T-cell (primary cell): ENCODE measurements at regions of chr3 and their contacts with region 1.

Region 1: GRCh38 chr3:67384760-67385397 is 269.5 kb downstream of the SUCLG2 start:
- DNase-seq: peak in 31 of 35 experiments; percentile 2 to 54 (median 25)
- ATAC-seq: peak in 1 of 4 experiments; percentile 49
- H3K4me3 ChIP-seq: no peak overlapping the region
- H3K4me3 Mint-ChIP-seq: no peak overlapping the region
- H3K27ac ChIP-seq: no peak overlapping the region
- H3K27ac Mint-ChIP-seq: peak overlapping the region in 1 of 2 donors; percentile 64
- H3K4me1 ChIP-seq: peaks cover 0 to 2% of the 10 kb centered on the region in 2 experiments
- H3K4me1 Mint-ChIP-seq: peaks cover 5 to 13% (median 6%) of the 10 kb centered on the region in 3 donors
- H3K27me3 ChIP-seq: no peaks in the 10 kb centered on the region
- H3K27me3 Mint-ChIP-seq: no peaks in the 10 kb centered on the region

Region 2: GRCh38 chr3:67478423-67478822 is 93.5 kb after region 1 on chr3:
- CTCF ChIA-PET with region 1: no interaction called
- POLR2A ChIA-PET with region 1: no interaction called
- DNase-seq: no peak
- ATAC-seq: no peak
- H3K4me3 ChIP-seq: no peak overlapping the region
- H3K4me3 Mint-ChIP-seq: no peak overlapping the region
- H3K27ac ChIP-seq: no peak overlapping the region
- H3K27ac Mint-ChIP-seq: no peak overlapping the region
- H3K4me1 ChIP-seq: no peaks in the 10 kb centered on the region
- H3K4me1 Mint-ChIP-seq: peaks cover 0 to 17% (median 4%) of the 10 kb centered on the region in 3 donors
- H3K27me3 ChIP-seq: no peaks in the 10 kb centered on the region
- H3K27me3 Mint-ChIP-seq: no peaks in the 10 kb centered on the region

Region 3: DNA sequence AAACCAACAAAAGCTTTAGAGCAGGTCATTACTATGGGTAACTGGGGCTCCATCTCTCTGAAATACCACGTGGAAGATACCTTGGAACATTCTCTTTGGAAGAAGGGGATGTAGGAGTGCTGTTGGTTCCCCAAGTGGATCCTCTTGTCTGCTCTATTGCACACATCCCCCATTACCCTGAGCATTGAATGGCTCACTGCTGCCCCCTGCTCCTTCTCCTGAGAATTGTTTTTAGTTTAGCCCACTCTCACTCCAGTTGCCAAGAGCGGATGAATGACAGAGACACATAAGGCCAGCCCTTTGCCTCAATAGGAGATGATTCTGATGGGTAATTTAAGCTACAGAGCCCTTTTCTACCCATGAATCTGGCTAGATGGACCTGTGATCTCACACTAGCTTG is 405.2 kb after region 1 on chr3:
- CTCF ChIA-PET with region 1: interaction called, 14 to 22 read pairs
- POLR2A ChIA-PET with region 1: no interaction called
- DNase-seq: peak in 34 of 35 experiments; percentile 13 to 77 (median 54)
- ATAC-seq: peak; percentile 76 to 93 (median 82)
- H3K4me3 ChIP-seq: no peak overlapping the region
- H3K4me3 Mint-ChIP-seq: no peak overlapping the region
- H3K27ac ChIP-seq: no peak overlapping the region
- H3K27ac Mint-ChIP-seq: peak overlapping the region in 1 of 2 donors; percentile 4
- H3K4me1 ChIP-seq: peaks cover 0 to 5% of the 10 kb centered on the region in 2 experiments
- H3K4me1 Mint-ChIP-seq: peaks cover 10 to 14% (median 14%) of the 10 kb centered on the region in 3 donors
- H3K27me3 ChIP-seq: no peaks in the 10 kb centered on the region
- H3K27me3 Mint-ChIP-seq: no peaks in the 10 kb centered on the region